Activated B cell treated with CpG ODN at 0.5 μM for 24 hours (primary cell): ENCODE measurements at regions of chr1 and their contacts with region 1.

Region 1: GRCh38 chr1:23838401-23838866 is 13.2 kb upstream of the HMGCL start:
- DNase-seq: peak; percentile 70
- ATAC-seq: peak; percentile 100
- H3K4me3 Mint-ChIP-seq: peak overlapping the region; percentile 76
- H3K27ac Mint-ChIP-seq: peak overlapping the region; percentile 63
- H3K4me1 Mint-ChIP-seq: peaks cover 10% of the 10 kb centered on the region
- H3K27me3 Mint-ChIP-seq: no peaks in the 10 kb centered on the region
- CTCF ChIP-seq: no peak

Region 2: GRCh38 chr1:23514111-23514679 is 324.2 kb before region 1 on chr1:
- CTCF ChIA-PET with region 1: no interaction called
- POLR2A ChIA-PET with region 1: interaction called, 12 read pairs
- intact Hi-C with region 1: no loop called
- DNase-seq: no peak
- ATAC-seq: no peak
- H3K4me3 Mint-ChIP-seq: no peak overlapping the region
- H3K27ac Mint-ChIP-seq: no peak overlapping the region
- H3K4me1 Mint-ChIP-seq: peaks cover 2% of the 10 kb centered on the region
- H3K27me3 Mint-ChIP-seq: no peaks in the 10 kb centered on the region
- CTCF ChIP-seq: no peak

Region 3: GRCh38 chr1:23777979-23778814 is 60.2 kb before region 1 on chr1 and contains the start of gene PITHD1:
- CTCF ChIA-PET with region 1: no interaction called
- POLR2A ChIA-PET with region 1: no interaction called
- intact Hi-C with region 1: loop called (anchors 2 kb)
- DNase-seq: peak; percentile 83
- ATAC-seq: peak; percentile 86
- H3K4me3 Mint-ChIP-seq: peak within 1 kb of the TSS; percentile 91
- H3K27ac Mint-ChIP-seq: peak within 1 kb of the TSS; percentile 90
- H3K4me1 Mint-ChIP-seq: peaks cover 30% of the 10 kb centered on the region
- H3K27me3 Mint-ChIP-seq: no peaks in the 10 kb centered on the region
- CTCF ChIP-seq: no peak
- total RNA-seq, gene PITHD1: 58.7 and 63.3 TPM in 2 replicates

Region 4: GRCh38 chr1:23825076-23825761 is 13.2 kb before region 1 on chr1 and contains the start of gene HMGCL:
- CTCF ChIA-PET with region 1: no interaction called
- POLR2A ChIA-PET with region 1: interaction called, 23 read pairs
- intact Hi-C with region 1: loop called (anchors 1 kb)
- DNase-seq: peak; percentile 81
- ATAC-seq: peak; percentile 95
- H3K4me3 Mint-ChIP-seq: peak within 1 kb of the TSS; percentile 96
- H3K27ac Mint-ChIP-seq: peak within 1 kb of the TSS; percentile 95
- H3K4me1 Mint-ChIP-seq: peaks cover 20% of the 10 kb centered on the region
- H3K27me3 Mint-ChIP-seq: no peaks in the 10 kb centered on the region
- CTCF ChIP-seq: no peak
- total RNA-seq, gene HMGCL: 21.0 and 30.7 TPM in 2 replicates

Region 5: DNA sequence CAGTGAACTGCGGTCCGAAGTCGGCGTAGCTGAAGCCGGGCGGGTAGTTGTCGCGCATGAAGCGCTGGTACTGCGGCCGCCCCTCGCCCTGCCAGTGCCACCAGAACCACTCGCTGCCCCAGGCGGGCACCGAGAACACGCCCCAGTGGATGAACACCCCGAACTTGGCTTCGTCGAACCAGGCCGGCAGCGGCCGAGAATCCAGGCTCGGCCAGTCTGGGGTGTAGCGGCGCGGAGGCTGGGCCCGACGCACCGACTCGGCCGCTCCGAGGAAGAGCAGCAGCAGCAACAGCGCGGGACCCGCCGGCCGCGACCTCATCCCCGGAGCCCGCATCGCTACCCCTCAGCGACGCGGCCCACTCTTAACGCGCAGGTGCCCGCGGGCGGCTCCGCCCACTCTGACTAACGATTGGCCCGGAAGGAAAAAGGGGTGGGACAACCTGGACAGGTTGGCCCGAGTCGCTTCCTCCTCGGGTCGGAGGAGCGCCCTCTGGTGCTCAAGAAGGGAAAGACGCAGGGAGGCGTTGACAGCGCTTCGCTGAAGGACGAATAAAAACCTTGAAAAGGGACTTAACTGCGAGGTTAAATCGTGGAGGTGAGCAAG is 29.6 kb after region 1 on chr1 and contains the start of gene FUCA1:
- CTCF ChIA-PET with region 1: no interaction called
- POLR2A ChIA-PET with region 1: no interaction called
- intact Hi-C with region 1: loop called (anchors 1 kb)
- DNase-seq: peak; percentile 92
- ATAC-seq: peak; percentile 97
- H3K4me3 Mint-ChIP-seq: peak within 1 kb of the TSS; percentile 84
- H3K27ac Mint-ChIP-seq: peak within 1 kb of the TSS; percentile 87
- H3K4me1 Mint-ChIP-seq: peaks cover 36% of the 10 kb centered on the region
- H3K27me3 Mint-ChIP-seq: no peaks in the 10 kb centered on the region
- CTCF ChIP-seq: no peak
- total RNA-seq, gene FUCA1: 9.5 and 10.7 TPM in 2 replicates

Region 6: DNA sequence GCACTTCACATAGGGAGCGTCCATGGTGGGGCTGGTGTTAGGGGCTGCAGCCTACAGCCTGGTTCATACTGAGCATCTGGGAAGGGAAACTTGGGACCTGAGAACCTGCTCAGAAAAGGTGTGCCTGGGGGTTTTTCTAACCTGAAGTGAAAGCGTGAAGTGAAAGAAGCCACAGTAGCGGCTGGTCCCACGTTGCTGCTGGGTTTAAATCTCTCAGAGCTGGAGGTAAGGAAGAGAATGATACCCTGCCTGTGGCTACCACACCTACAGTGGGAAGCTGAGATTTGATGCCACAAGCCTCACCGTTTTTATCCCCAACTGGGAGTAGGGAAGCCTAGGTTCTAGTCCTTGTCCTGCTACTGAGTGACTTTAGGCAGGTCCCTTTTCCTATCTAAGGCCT is 50.6 kb after region 1 on chr1:
- CTCF ChIA-PET with region 1: no interaction called
- POLR2A ChIA-PET with region 1: no interaction called
- intact Hi-C with region 1: loop called (anchors 2 kb)
- DNase-seq: peak; percentile 31
- ATAC-seq: peak; percentile 64
- H3K4me3 Mint-ChIP-seq: peak overlapping the region; percentile 74
- H3K27ac Mint-ChIP-seq: peak overlapping the region; percentile 97
- H3K4me1 Mint-ChIP-seq: peaks cover 81% of the 10 kb centered on the region
- H3K27me3 Mint-ChIP-seq: no peaks in the 10 kb centered on the region
- CTCF ChIP-seq: no peak

Region 7: DNA sequence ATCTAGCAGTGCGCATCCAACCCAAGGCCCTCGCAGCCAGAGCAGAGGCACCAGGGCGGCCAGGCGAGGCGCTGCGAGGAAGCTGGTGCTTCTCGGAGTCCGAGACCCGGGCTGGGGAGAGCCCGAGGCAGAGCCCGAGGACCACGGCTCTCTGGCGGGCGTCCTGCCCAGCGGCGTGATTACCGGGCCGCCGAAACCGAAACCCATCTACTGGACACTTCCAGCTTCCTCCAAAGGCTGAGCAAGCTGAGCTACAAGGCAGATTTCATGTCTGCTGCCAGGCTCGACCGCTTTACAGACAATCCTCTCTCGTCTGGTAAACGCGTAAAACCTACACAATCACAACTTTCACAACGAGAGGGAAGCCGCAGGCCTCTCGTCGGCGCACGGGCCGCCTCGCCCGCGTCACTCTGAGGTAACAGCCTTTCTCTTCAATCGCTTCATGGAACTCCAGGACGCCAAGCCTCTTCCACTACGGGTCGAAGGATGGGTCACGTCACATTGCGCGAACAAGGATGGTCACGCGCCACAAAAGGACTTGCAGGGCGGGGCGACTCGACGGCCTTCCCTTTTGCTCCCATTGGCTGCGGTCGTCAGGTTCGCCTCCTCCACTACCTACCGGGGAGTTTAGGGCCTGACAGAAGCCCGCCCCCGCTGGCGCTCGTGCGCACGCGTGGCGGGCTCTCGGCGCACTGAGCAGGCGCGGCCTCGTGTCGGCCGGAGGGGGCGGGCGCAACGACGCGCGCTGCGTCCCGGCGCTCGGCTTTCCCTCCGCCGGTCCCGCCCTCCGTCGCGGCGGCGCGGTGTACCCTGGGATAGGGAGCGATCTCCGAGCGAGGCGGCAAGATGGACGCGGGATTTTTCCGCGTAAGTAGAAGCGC is 804.3 kb after region 1 on chr1 and contains the start of gene SRRM1:
- CTCF ChIA-PET with region 1: no interaction called
- POLR2A ChIA-PET with region 1: interaction called, 22 read pairs
- intact Hi-C with region 1: no loop called
- DNase-seq: peak; percentile 96
- ATAC-seq: peak; percentile 90
- H3K4me3 Mint-ChIP-seq: peak within 1 kb of the TSS; percentile 96
- H3K27ac Mint-ChIP-seq: peak within 1 kb of the TSS; percentile 99
- H3K4me1 Mint-ChIP-seq: peaks cover 38% of the 10 kb centered on the region
- H3K27me3 Mint-ChIP-seq: no peaks in the 10 kb centered on the region
- CTCF ChIP-seq: no peak
- total RNA-seq, gene SRRM1: 214 and 220 TPM in 2 replicates

Region 8: GRCh38 chr1:25217598-25218232 is 1379.3 kb after region 1 on chr1:
- CTCF ChIA-PET with region 1: no interaction called
- POLR2A ChIA-PET with region 1: no interaction called
- intact Hi-C with region 1: no loop called
- DNase-seq: no peak
- ATAC-seq: no peak
- H3K4me3 Mint-ChIP-seq: no peak overlapping the region
- H3K27ac Mint-ChIP-seq: no peak overlapping the region
- H3K4me1 Mint-ChIP-seq: peaks cover 12% of the 10 kb centered on the region
- H3K27me3 Mint-ChIP-seq: no peaks in the 10 kb centered on the region
- CTCF ChIP-seq: no peak